Activated naive CD4-positive, alpha-beta T cell treated with anti-CD3 and anti-CD28 coated beads for 36 hours (primary cell): ENCODE measurements at regions of chr19 and their contacts with region 1.

Region 1: GRCh38 chr19:32041681-32042292 is 303.6 kb upstream of the ZNF507 start:
- DNase-seq: peak; percentile 62
- H3K4me3 Mint-ChIP-seq: no peak overlapping the region
- H3K27ac Mint-ChIP-seq: no peak overlapping the region
- H3K4me1 Mint-ChIP-seq: peaks cover 6% of the 10 kb centered on the region
- H3K27me3 Mint-ChIP-seq: peaks cover 27% of the 10 kb centered on the region

Region 2: DNA sequence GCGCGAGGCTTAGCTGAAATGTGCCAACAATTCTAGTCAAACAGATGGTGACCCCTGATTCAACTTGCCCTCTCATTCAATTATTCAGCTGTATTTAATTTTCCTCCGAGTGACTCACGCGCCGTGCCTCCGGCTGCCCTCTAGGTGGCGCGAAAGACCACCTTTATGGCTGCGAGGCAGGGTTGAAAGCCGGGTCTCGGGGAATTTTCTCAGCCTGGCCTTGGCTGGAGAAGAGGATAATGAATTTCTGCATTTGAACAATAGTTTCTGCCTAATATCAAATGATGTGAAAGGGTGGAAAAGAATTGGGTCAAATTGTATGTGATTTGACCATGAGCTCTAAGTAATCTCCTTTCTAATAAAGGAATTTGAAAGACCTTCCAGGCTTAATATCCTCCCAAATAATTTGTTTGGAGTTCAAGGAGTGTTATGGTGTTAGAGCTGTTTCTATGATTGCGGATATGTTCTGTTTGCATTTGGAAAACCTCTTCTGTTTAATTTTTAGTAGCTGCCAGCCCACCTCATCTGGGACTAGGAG is 1358.7 kb before region 1 on chr19:
- CTCF ChIA-PET with region 1: no interaction called
- intact Hi-C with region 1: loop called (anchors 5 kb)
- DNase-seq: peak; percentile 73
- H3K4me3 Mint-ChIP-seq: no peak overlapping the region
- H3K27ac Mint-ChIP-seq: no peak overlapping the region
- H3K4me1 Mint-ChIP-seq: no peaks in the 10 kb centered on the region
- H3K27me3 Mint-ChIP-seq: peaks cover 42% of the 10 kb centered on the region

Region 3: GRCh38 chr19:30784850-30785457 is 1256.8 kb before region 1 on chr19:
- CTCF ChIA-PET with region 1: no interaction called
- intact Hi-C with region 1: loop called (anchors 10 kb)
- DNase-seq: peak; percentile 72
- H3K4me3 Mint-ChIP-seq: no peak overlapping the region
- H3K27ac Mint-ChIP-seq: no peak overlapping the region
- H3K4me1 Mint-ChIP-seq: no peaks in the 10 kb centered on the region
- H3K27me3 Mint-ChIP-seq: peaks cover 16% of the 10 kb centered on the region